ENCODE measurements at regions of chr19 and their contacts with region 1.

Region 1: GRCh38 chr19:37466798-37467607 is at the start of gene ZNF569:
- DNase-seq: peak; percentile 91
- ATAC-seq: peak; percentile 83
- H3K4me3 ChIP-seq: peak within 1 kb of the TSS; percentile 85 to 93
- H3K27ac ChIP-seq: peak within 1 kb of the TSS; percentile 94
- H3K4me1 ChIP-seq: peaks cover 7% of the 10 kb centered on the region; the same call in 1 of the 2 replicates
- H3K27me3 ChIP-seq: no peaks in the 10 kb centered on the region
- CTCF ChIP-seq: no peak
- total RNA-seq, gene ZNF569: 15.6 TPM

Region 2: GRCh38 chr19:37563518-37563917 is 96.5 kb after region 1 on chr19:
- CTCF ChIA-PET with region 1: no interaction called
- POLR2A ChIA-PET with region 1: no interaction called
- in situ Hi-C with region 1: no loop called
- intact Hi-C with region 1: no loop called
- DNase-seq: no peak
- ATAC-seq: no peak
- H3K4me3 ChIP-seq: no peak overlapping the region
- H3K27ac ChIP-seq: no peak overlapping the region
- H3K4me1 ChIP-seq: no peaks in the 10 kb centered on the region
- H3K27me3 ChIP-seq: no peaks in the 10 kb centered on the region
- CTCF ChIP-seq: no peak

Region 3: GRCh38 chr19:37654629-37655300 is 187.8 kb after region 1 on chr19:
- CTCF ChIA-PET with region 1: no interaction called
- POLR2A ChIA-PET with region 1: no interaction called
- in situ Hi-C with region 1: no loop called
- intact Hi-C with region 1: loop called (anchors 5 kb)
- DNase-seq: peak; percentile 15
- ATAC-seq: peak; percentile 70
- H3K4me3 ChIP-seq: peak overlapping the region; percentile 73 to 93
- H3K27ac ChIP-seq: peak overlapping the region; percentile 97
- H3K4me1 ChIP-seq: peaks cover 8% of the 10 kb centered on the region; the same call in 1 of the 2 replicates
- H3K27me3 ChIP-seq: no peaks in the 10 kb centered on the region
- CTCF ChIP-seq: no peak